ENCODE measurements at regions of chr3 and their contacts with region 1.

Region 1: GRCh38 chr3:176430244-176431037 is 766.8 kb downstream of the TBL1XR1 start:
- DNase-seq: peak; percentile 76
- ATAC-seq: peak; percentile 91
- H3K4me3 ChIP-seq: no peak overlapping the region
- H3K27ac ChIP-seq: no peak overlapping the region
- H3K4me1 ChIP-seq: peaks cover 2% of the 10 kb centered on the region; the same call in 1 of the 2 replicates
- H3K27me3 ChIP-seq: no peaks in the 10 kb centered on the region
- CTCF ChIP-seq: peak; percentile 90
- POLR2A ChIP-seq: no peak
- RAD21 ChIP-seq: peak; percentile 90

Region 2: DNA sequence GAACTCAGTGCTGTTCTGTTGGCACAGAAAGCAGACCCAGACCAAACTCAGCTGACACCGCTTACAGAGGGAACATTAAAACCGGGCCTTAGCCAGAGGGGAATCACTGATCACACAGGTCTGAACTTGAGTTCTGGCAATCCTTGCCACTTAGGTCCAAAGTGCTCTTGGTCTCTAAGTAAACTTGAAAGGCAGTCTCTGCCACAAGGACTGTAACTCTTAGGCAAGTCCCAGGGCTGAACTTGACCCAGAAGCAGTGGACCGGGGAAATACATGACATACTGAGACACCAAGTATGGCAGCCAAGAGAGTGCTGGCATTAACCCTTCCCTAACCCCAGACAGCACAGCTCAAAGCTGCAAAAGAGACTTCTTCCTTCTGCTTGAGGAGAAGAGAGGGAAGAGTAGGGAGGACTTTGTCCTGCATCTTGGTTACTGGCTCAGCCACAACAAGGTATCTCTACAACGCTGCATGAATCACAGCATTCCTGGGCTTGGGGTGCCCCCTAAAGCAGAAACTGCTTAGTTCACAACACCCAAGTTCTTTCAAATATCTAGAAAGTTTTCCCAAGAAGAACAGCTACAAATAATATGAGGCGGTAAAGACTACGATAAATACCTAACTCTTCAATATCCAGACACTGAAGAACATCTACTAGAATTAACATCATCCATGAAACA is 1538.8 kb before region 1 on chr3:
- CTCF ChIA-PET with region 1: no interaction called
- POLR2A ChIA-PET with region 1: no interaction called
- dilution Hi-C with region 1: no loop called
- in situ Hi-C with region 1: no loop called
- intact Hi-C with region 1: no loop called
- DNase-seq: peak; percentile 9
- ATAC-seq: no peak
- H3K4me3 ChIP-seq: no peak overlapping the region
- H3K27ac ChIP-seq: no peak overlapping the region
- H3K4me1 ChIP-seq: 0 out of 2 replicates have a peak, but pooled peaks cover 2% of the 10 kb centered on the region
- H3K27me3 ChIP-seq: no peaks in the 10 kb centered on the region
- CTCF ChIP-seq: no peak
- POLR2A ChIP-seq: no peak
- RAD21 ChIP-seq: peak; percentile 29; the same call in 1 of the 2 replicates

Region 3: GRCh38 chr3:175149675-175150074 is 1280.8 kb before region 1 on chr3:
- CTCF ChIA-PET with region 1: no interaction called
- POLR2A ChIA-PET with region 1: no interaction called
- dilution Hi-C with region 1: no loop called
- in situ Hi-C with region 1: loop called (anchors 25 kb)
- intact Hi-C with region 1: loop called (anchors 5 kb)
- DNase-seq: peak; percentile 5
- ATAC-seq: no peak
- H3K4me3 ChIP-seq: no peak overlapping the region
- H3K27ac ChIP-seq: no peak overlapping the region
- H3K4me1 ChIP-seq: no peaks in the 10 kb centered on the region
- H3K27me3 ChIP-seq: no peaks in the 10 kb centered on the region
- CTCF ChIP-seq: no peak
- POLR2A ChIP-seq: no peak
- RAD21 ChIP-seq: no peak

Region 4: DNA sequence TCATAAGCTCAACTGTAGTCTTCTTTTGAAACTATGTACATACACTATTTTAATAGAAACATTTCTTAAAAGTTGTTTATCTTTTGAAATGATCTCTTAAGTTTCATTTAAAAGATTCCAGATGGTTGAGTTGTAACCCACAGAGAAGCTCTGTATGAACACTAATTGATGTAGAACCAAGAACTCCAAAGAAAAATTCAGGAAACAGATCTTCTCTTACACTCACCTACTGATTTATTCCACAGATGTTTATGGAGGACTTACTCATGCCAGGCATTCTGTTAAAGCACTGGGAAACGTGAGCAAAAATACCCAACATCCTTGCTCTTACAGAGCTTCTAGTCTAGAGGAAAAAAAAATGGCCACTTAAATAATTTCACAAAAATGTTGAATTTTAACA is 1020.2 kb before region 1 on chr3:
- CTCF ChIA-PET with region 1: no interaction called
- POLR2A ChIA-PET with region 1: no interaction called
- dilution Hi-C with region 1: no loop called
- in situ Hi-C with region 1: no loop called
- intact Hi-C with region 1: loop called (anchors 5 kb)
- DNase-seq: peak; percentile 89
- ATAC-seq: peak; percentile 79
- H3K4me3 ChIP-seq: no peak overlapping the region
- H3K27ac ChIP-seq: peak overlapping the region; percentile 68; the same call in 1 of the 2 replicates
- H3K4me1 ChIP-seq: peaks cover 11% of the 10 kb centered on the region
- H3K27me3 ChIP-seq: no peaks in the 10 kb centered on the region
- CTCF ChIP-seq: no peak
- POLR2A ChIP-seq: no peak
- RAD21 ChIP-seq: no peak

Region 5: GRCh38 chr3:175432376-175433025 is 997.9 kb before region 1 on chr3:
- CTCF ChIA-PET with region 1: no interaction called
- POLR2A ChIA-PET with region 1: no interaction called
- dilution Hi-C with region 1: no loop called
- in situ Hi-C with region 1: no loop called
- intact Hi-C with region 1: loop called (anchors 1 kb)
- DNase-seq: peak; percentile 56
- ATAC-seq: no peak; the same call in 1 of the 2 replicates
- H3K4me3 ChIP-seq: peak overlapping the region; percentile 25; the same call in 1 of the 2 replicates
- H3K27ac ChIP-seq: peak overlapping the region; percentile 95
- H3K4me1 ChIP-seq: peaks cover 7% of the 10 kb centered on the region; the same call in 1 of the 2 replicates
- H3K27me3 ChIP-seq: no peaks in the 10 kb centered on the region
- CTCF ChIP-seq: no peak
- POLR2A ChIP-seq: no peak
- RAD21 ChIP-seq: no peak

Region 6: GRCh38 chr3:175664911-175665310 is 765.5 kb before region 1 on chr3:
- CTCF ChIA-PET with region 1: no interaction called
- POLR2A ChIA-PET with region 1: no interaction called
- dilution Hi-C with region 1: no loop called
- in situ Hi-C with region 1: no loop called
- intact Hi-C with region 1: loop called (anchors 10 kb)
- DNase-seq: no peak
- ATAC-seq: no peak
- H3K4me3 ChIP-seq: no peak overlapping the region
- H3K27ac ChIP-seq: no peak overlapping the region
- H3K4me1 ChIP-seq: no peaks in the 10 kb centered on the region
- H3K27me3 ChIP-seq: no peaks in the 10 kb centered on the region
- CTCF ChIP-seq: no peak
- POLR2A ChIP-seq: no peak
- RAD21 ChIP-seq: no peak

Region 7: DNA sequence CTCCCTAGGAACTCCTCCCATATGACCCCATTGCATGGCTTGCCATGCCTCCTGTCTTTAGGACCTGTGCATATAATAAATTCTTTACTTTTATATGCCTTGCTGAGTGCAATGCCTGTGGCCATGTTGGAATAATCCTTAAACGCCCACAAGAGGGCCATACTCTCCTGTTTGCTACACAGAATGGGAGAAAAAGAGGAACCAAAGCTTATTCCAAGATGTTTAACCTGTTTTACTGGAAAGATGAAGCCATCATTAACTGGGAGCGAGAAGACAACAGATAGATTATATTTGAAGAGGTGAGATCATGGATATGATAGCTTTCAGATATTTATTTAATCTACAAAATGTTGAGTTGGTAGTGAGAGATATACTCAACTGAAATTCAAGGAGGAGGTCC is 473.4 kb before region 1 on chr3:
- CTCF ChIA-PET with region 1: interaction called, 7 read pairs
- POLR2A ChIA-PET with region 1: no interaction called
- dilution Hi-C with region 1: no loop called
- in situ Hi-C with region 1: no loop called
- intact Hi-C with region 1: loop called (anchors 1 kb)
- DNase-seq: peak; percentile 10
- ATAC-seq: peak; percentile 56
- H3K4me3 ChIP-seq: no peak overlapping the region
- H3K27ac ChIP-seq: no peak overlapping the region
- H3K4me1 ChIP-seq: no peaks in the 10 kb centered on the region
- H3K27me3 ChIP-seq: no peaks in the 10 kb centered on the region
- CTCF ChIP-seq: peak; percentile 40; the same call in 1 of the 2 replicates
- POLR2A ChIP-seq: no peak
- RAD21 ChIP-seq: peak; percentile 26; the same call in 1 of the 2 replicates

Region 8: DNA sequence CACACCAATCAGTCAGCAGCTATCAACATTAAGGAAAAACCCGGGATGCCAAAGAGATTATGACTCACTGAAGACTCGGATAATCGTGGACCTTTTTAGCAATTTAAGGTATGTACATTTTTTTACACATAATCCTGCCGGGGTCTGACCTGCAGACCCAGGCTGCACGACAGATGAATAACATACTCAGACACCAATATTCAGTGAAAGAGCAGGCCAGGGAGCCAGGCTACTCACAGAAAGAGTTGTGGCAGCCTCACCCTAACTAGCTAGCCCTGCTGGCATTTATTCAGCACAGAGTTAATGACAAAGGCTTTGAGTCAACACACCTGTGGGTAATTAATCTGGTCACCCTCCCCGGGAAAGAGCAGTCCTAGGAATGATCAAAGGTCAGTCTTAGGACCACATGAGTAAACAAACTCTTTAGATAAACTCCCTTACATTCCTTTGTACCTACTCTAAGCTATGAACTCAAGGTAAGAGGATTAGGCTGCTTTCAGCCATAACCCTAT is 39.3 kb after region 1 on chr3:
- CTCF ChIA-PET with region 1: no interaction called
- POLR2A ChIA-PET with region 1: no interaction called
- dilution Hi-C with region 1: no loop called
- in situ Hi-C with region 1: no loop called
- intact Hi-C with region 1: no loop called
- DNase-seq: no peak
- ATAC-seq: peak; percentile 32
- H3K4me3 ChIP-seq: no peak overlapping the region
- H3K27ac ChIP-seq: no peak overlapping the region
- H3K4me1 ChIP-seq: no peaks in the 10 kb centered on the region
- H3K27me3 ChIP-seq: no peaks in the 10 kb centered on the region
- CTCF ChIP-seq: no peak
- POLR2A ChIP-seq: no peak
- RAD21 ChIP-seq: no peak

Region 9: DNA sequence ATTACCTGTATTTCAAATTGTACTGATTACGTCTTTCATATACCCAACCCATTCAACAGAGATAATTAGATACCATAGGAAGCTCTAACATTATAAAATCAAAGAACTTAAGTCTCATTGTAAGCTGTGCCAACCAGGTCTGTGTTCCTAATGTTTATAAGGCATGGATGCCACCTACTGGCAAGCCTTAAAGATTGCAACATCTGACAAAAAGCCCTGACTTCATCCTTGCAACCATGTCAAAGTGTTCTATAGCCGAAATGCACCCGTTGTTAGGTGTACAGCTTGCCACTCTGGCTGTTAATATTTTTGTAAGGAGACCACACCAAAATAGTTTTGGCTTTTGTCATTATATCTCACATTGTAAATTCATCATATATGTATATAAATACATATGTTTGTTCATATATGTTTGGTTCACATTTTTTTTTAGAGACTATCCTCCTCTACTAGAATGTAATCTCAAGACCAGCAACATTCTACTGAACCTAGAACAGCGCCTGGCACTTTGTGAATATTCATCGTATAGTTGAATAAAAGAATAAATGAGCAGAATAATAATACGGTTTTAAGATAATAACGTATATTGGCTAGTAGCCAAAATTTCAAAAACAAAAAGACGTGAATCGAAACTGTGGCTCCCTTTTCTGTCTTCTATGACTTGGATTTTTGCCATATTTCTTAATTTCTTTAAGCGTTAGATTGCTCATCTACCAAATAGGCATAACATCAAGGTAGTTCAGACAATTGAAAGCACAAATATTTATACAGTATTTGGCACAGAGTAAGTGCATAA is 508.8 kb after region 1 on chr3:
- CTCF ChIA-PET with region 1: no interaction called
- POLR2A ChIA-PET with region 1: no interaction called
- dilution Hi-C with region 1: no loop called
- in situ Hi-C with region 1: no loop called
- intact Hi-C with region 1: loop called (anchors 2 kb)
- DNase-seq: peak; percentile 86
- ATAC-seq: peak; percentile 90
- H3K4me3 ChIP-seq: no peak overlapping the region
- H3K27ac ChIP-seq: no peak overlapping the region
- H3K4me1 ChIP-seq: no peaks in the 10 kb centered on the region
- H3K27me3 ChIP-seq: no peaks in the 10 kb centered on the region
- CTCF ChIP-seq: peak; percentile 87
- POLR2A ChIP-seq: no peak
- RAD21 ChIP-seq: peak; percentile 85

Measured in IMR-90 (cell line).